ENCODE measurements at regions of chr5 and their contacts with region 1.

Region 1: GRCh38 chr5:67246108-67246507 is 49.5 kb upstream of the CD180 start:
- DNase-seq: peak; percentile 88
- H3K4me3 Mint-ChIP-seq: no peak overlapping the region
- H3K27ac Mint-ChIP-seq: no peak overlapping the region
- H3K4me1 Mint-ChIP-seq: no peaks in the 10 kb centered on the region
- H3K27me3 Mint-ChIP-seq: no peaks in the 10 kb centered on the region
- CTCF ChIP-seq: peak; percentile 54

Region 2: DNA sequence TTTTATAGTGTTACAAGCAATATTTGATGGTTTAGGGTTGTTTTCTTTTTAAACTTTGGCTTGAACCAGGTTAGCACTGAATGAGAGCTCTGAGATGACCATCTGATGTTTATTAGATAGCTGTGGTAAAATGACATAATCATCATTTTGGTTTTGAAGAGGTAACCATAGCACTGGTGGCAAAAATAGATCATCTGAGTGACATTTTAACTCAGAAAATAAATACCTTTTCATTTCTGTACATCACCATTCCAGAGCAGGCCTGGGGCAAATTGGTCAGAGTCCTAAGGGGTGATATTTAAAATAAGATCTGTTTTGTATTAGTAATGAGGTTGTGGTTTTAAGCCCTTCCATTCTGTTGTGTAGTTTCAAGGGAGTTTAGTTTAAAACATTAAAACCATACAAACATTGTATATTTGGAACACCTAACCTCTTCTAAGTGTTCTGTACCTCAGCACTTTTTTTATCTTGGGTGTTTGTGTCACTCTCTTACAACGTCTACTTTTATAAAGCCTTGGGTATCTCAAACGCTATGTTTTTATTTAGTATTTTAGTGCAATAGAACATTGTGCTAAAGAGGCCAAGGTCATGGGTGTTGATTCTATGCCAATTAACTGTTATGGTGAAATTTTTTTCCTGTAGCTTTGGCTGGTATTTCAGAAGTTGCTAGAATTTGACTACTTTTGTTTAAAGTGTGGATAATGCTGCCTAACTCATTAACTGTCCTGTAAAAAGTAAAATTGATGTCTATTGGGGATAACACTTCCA is 215.6 kb before region 1 on chr5:
- CTCF ChIA-PET with region 1: no interaction called
- POLR2A ChIA-PET with region 1: no interaction called
- intact Hi-C with region 1: no loop called
- DNase-seq: no peak
- H3K4me3 Mint-ChIP-seq: no peak overlapping the region
- H3K27ac Mint-ChIP-seq: peak overlapping the region; percentile 42
- H3K4me1 Mint-ChIP-seq: peaks cover 42% of the 10 kb centered on the region
- H3K27me3 Mint-ChIP-seq: no peaks in the 10 kb centered on the region
- CTCF ChIP-seq: no peak

Region 3: GRCh38 chr5:67268231-67269021 is 22.3 kb after region 1 on chr5:
- CTCF ChIA-PET with region 1: interaction called, 18 read pairs
- POLR2A ChIA-PET with region 1: interaction called, 83 read pairs
- intact Hi-C with region 1: no loop called
- DNase-seq: peak; percentile 97
- H3K4me3 Mint-ChIP-seq: no peak overlapping the region
- H3K27ac Mint-ChIP-seq: no peak overlapping the region
- H3K4me1 Mint-ChIP-seq: peaks cover 18% of the 10 kb centered on the region
- H3K27me3 Mint-ChIP-seq: no peaks in the 10 kb centered on the region
- CTCF ChIP-seq: no peak

Region 4: DNA sequence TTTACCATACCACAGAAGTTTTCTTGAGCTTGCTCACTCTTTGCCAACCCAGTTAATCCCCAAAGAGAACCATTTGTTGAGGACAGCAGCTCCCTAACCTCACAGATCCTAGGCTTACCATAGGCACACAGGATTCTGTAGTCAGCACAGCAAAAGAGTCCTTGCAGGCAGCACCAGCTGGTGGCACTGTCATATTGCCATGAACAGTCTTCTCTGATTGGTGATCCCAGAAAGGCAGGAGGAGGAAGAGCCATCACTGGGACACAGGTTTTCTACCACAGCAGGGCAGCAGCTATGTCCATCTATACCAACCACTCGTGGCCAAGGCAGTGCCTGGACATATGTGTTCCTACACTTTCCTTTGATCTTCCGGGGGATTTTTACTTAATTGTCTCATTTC is 247.6 kb after region 1 on chr5:
- CTCF ChIA-PET with region 1: interaction called, 6 read pairs
- POLR2A ChIA-PET with region 1: interaction called, 10 read pairs
- intact Hi-C with region 1: no loop called
- DNase-seq: peak; percentile 28
- H3K4me3 Mint-ChIP-seq: no peak overlapping the region
- H3K27ac Mint-ChIP-seq: no peak overlapping the region
- H3K4me1 Mint-ChIP-seq: peaks cover 29% of the 10 kb centered on the region
- H3K27me3 Mint-ChIP-seq: no peaks in the 10 kb centered on the region
- CTCF ChIP-seq: no peak

Region 5: DNA sequence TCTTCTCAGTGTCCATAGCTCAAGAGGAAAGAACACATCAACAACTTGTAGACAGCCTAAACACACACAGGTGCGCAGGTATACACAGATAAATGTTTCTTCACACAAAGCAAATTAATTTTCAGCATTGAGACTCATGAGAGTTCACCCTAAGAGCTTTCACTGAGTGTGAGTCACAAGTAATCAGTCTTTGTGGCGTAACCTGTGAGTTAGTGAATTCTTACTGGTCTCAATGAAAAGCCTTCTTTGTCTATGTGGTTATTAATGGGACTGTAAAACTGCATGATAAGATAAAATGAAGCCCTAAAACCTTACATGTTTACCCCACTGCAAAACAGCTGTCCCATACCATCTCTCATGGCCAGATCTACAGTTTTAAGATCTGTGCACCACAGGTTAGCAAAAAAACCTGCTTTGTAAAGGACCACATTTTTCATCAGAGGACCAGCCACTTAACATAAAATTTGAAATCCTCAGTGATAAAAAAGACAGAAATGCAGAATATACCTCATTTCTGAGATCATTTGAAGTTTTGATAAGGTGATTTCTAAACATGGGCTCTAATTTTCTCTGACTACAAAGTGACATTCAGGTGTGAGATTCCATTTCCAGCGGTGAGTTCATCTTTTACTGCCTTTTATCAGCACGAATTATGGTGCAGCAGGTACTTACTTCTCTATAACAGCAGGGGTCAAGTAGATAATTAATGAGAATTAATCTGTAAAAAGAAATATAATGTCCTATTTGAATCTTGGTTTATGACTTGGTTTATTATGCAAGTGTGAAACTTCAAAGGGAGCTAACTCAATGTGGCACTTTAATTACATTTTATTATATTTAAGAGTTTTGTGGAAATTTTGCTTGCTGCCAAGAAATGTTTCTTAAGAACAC is 633.8 kb after region 1 on chr5:
- CTCF ChIA-PET with region 1: no interaction called
- POLR2A ChIA-PET with region 1: interaction called, 56 read pairs
- intact Hi-C with region 1: no loop called
- DNase-seq: peak; percentile 62
- H3K4me3 Mint-ChIP-seq: no peak overlapping the region
- H3K27ac Mint-ChIP-seq: peak overlapping the region; percentile 74
- H3K4me1 Mint-ChIP-seq: peaks cover 42% of the 10 kb centered on the region
- H3K27me3 Mint-ChIP-seq: no peaks in the 10 kb centered on the region
- CTCF ChIP-seq: no peak

Region 6: DNA sequence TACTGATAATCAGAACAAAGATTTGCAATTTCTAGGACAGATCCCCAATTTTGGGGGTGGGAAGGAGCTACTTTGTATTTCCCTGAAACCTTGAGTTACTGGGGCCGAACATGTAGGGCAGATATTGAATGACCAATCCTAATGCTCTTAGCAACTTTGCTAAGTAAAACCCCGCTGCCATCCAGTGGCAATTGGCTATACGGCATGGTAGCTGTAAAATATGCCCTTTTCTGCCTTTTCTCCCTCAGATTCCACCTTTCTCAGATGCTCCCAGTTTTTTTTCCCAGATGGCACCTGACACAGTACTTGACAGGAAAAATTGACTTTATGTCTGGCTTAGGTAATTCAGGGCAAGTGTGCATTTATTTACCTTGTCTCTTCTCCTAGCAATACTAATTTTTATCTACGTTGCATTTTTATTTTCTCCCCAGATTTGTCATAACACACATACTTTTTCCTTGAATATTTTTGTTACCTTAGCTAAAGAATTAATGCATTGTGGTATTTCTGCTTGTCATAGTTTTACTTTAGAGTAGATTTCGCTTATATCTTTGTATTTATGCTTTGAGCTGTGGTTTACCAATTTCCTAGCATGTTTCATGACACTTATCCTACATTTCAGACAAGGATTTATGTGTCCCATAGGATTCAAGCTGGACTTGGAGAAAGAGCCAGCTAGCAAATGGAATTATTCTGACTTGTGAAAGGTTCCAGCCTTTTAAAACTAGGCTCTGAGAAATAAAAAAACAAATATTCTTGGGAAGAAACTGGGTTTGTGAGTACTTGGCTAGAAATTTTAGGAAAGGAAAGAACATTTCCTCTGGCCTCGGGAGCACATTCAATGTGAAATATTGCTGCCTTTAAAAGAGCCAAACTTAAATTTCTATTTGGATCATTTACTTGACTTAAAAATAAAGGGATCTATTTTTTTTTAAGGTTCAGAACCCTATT is 1006.8 kb after region 1 on chr5:
- CTCF ChIA-PET with region 1: interaction called, 16 read pairs
- POLR2A ChIA-PET with region 1: interaction called, 26 read pairs
- intact Hi-C with region 1: loop called (anchors 1 kb)
- DNase-seq: peak; percentile 66
- H3K4me3 Mint-ChIP-seq: peak overlapping the region; percentile 61
- H3K27ac Mint-ChIP-seq: peak overlapping the region; percentile 47
- H3K4me1 Mint-ChIP-seq: peaks cover 84% of the 10 kb centered on the region
- H3K27me3 Mint-ChIP-seq: no peaks in the 10 kb centered on the region
- CTCF ChIP-seq: peak; percentile 73